HEK293 (cell line): ENCODE measurements at regions of chr4 and their contacts with region 1.

Region 1: GRCh38 chr4:81405894-81406401 is 65.8 kb downstream of the RASGEF1B start:
- H3K4me3 ChIP-seq: no peak overlapping the region
- H3K27ac ChIP-seq: no peak overlapping the region
- H3K4me1 ChIP-seq: no peaks in the 10 kb centered on the region
- CTCF ChIP-seq: peak; percentile 42; the same call in 1 of the 2 replicates

Region 2: GRCh38 chr4:82201805-82202641 is 796.1 kb after region 1 on chr4:
- CTCF ChIA-PET with region 1: interaction called, 13 read pairs
- POLR2A ChIA-PET with region 1: no interaction called
- H3K4me3 ChIP-seq: no peak overlapping the region
- H3K27ac ChIP-seq: no peak overlapping the region
- H3K4me1 ChIP-seq: no peaks in the 10 kb centered on the region
- CTCF ChIP-seq: 0 out of 2 replicates have a peak, but pooled peaks have one; percentile 18